ENCODE measurements at regions of chr7 and their contacts with region 1.

Region 1: DNA sequence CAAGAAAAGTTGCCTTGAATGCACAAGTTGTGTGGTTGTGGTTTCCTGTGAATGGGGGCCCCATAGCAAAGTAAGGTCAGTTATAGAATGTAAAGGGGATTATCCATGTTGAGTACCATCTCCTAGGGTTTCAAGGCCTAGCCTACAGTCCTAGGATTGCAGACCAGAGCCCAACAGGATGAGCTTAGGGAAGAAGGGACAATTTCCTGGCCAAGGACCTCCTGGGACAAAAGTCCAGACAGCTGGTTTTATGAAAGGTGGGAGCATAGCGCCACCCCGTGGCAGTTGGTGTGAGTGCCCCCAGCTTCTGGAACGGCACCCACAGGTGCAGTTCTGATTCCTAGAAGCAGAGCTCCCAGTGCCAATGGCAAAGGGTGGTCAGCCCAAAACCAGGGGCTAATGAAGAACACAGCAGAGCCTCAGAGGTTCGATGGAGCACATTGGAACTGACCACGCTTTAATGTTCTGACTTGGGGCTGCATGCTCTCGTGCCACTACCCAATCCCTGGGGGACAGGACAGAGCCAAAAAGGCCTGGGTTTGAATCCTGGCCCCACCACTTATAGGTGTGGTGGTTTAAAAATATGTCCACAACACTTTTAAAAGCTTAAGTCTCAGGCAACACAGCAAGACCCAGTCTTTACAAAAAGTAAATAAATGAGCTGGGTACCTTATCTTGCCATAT is 25.8 kb upstream of the TMEM120A start:
- DNase-seq: peak; percentile 34
- ATAC-seq: peak; percentile 94
- H3K4me3 ChIP-seq: no peak overlapping the region
- H3K27ac ChIP-seq: peak overlapping the region; percentile 41
- H3K4me1 ChIP-seq: peaks cover 10% of the 10 kb centered on the region; the same call in 1 of the 2 replicates
- H3K27me3 ChIP-seq: no peaks in the 10 kb centered on the region
- CTCF ChIP-seq: peak; percentile 89 to 94 (median 92)
- EP300 ChIP-seq: no peak
- POLR2A ChIP-seq: no peak
- RAD21 ChIP-seq: peak; percentile 91

Region 2: DNA sequence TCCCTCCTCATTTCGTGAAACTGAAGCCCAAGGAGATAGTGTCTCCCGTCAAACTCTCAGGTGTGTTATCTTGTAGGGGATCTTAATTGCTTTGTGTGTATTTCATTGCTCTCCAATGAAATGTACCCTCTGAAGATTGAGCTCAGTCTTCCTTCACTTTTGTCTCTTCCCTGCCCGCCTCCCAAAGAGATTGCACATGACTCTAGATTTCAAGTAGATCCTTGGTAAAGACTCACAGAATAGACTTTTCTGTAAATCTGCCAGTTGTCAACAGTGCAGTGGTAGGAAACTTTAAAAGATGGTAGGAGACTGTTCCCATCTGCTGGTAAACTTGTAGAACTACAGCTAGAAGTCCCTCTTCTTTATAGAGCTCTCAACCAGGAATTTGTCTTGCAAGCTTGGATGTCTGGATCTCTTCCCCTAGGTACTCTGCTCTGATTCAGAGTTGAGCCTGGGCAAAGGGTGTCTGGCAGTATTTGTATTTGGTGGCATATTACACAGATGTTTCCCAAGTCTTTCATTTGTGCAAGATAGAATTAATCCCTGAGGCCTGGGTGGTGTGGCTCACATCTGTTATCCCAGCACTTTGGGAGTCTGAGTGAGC is 257.8 kb before region 1 on chr7:
- CTCF ChIA-PET with region 1: interaction called, 24 read pairs
- POLR2A ChIA-PET with region 1: no interaction called
- RAD21 ChIA-PET with region 1: interaction called, 17 read pairs
- SMC1A ChIA-PET with region 1: interaction called, 14 read pairs
- in situ Hi-C with region 1: no loop called
- intact Hi-C with region 1: no loop called
- DNase-seq: peak; percentile 40
- ATAC-seq: peak; percentile 92
- H3K4me3 ChIP-seq: no peak overlapping the region
- H3K27ac ChIP-seq: no peak overlapping the region
- H3K4me1 ChIP-seq: no peaks in the 10 kb centered on the region
- H3K27me3 ChIP-seq: no peaks in the 10 kb centered on the region
- CTCF ChIP-seq: peak; percentile 72 to 80 (median 73)
- EP300 ChIP-seq: no peak
- POLR2A ChIP-seq: no peak
- RAD21 ChIP-seq: peak; percentile 94

Region 3: DNA sequence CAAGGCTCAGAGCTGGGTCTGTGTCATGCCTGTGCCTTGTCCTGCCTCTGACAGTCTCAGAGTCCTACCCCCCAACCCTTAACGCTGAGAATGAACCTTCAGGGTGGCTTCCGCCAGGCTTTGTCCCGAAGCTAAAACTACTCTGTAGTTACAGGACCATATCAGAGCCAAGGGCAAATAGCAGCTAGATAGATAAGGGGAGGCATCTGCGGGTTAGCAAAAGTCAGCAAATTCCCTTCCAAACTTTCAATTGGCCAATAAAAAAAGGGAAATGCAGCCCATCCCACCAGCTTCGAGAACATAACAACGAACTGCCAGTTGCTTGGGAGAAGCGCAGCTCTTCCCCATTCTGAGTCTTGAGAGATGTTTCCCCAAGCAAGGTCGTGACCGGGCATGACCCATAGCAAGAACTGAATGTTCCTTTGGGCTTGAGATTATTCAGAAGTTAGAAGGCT is 224.3 kb before region 1 on chr7:
- CTCF ChIA-PET with region 1: no interaction called
- POLR2A ChIA-PET with region 1: no interaction called
- RAD21 ChIA-PET with region 1: no interaction called
- SMC1A ChIA-PET with region 1: no interaction called
- in situ Hi-C with region 1: no loop called
- intact Hi-C with region 1: no loop called
- DNase-seq: no peak
- ATAC-seq: no peak
- H3K4me3 ChIP-seq: no peak overlapping the region
- H3K27ac ChIP-seq: no peak overlapping the region
- H3K4me1 ChIP-seq: no peaks in the 10 kb centered on the region
- H3K27me3 ChIP-seq: no peaks in the 10 kb centered on the region
- CTCF ChIP-seq: no peak
- EP300 ChIP-seq: no peak
- POLR2A ChIP-seq: no peak
- RAD21 ChIP-seq: no peak

Region 4: GRCh38 chr7:75866489-75867389 is 153.4 kb before region 1 on chr7:
- CTCF ChIA-PET with region 1: interaction called, 247 read pairs
- POLR2A ChIA-PET with region 1: interaction called, 9 read pairs
- RAD21 ChIA-PET with region 1: interaction called, 115 read pairs
- SMC1A ChIA-PET with region 1: interaction called, 75 read pairs
- in situ Hi-C with region 1: loop called (anchors 5 kb)
- intact Hi-C with region 1: loop called (anchors 1 kb)
- DNase-seq: no peak
- ATAC-seq: peak; percentile 98
- H3K4me3 ChIP-seq: no peak overlapping the region
- H3K27ac ChIP-seq: no peak overlapping the region
- H3K4me1 ChIP-seq: no peaks in the 10 kb centered on the region
- H3K27me3 ChIP-seq: no peaks in the 10 kb centered on the region
- CTCF ChIP-seq: peak; percentile 97 to 98 (median 97)
- EP300 ChIP-seq: no peak
- POLR2A ChIP-seq: no peak
- RAD21 ChIP-seq: peak; percentile 97

Region 5: GRCh38 chr7:75878769-75879611 is 141.2 kb before region 1 on chr7 and contains the start of gene RHBDD2:
- CTCF ChIA-PET with region 1: interaction called, 11 read pairs
- POLR2A ChIA-PET with region 1: no interaction called
- RAD21 ChIA-PET with region 1: interaction called, 13 read pairs
- SMC1A ChIA-PET with region 1: interaction called, 5 read pairs
- in situ Hi-C with region 1: no loop called
- intact Hi-C with region 1: no loop called
- DNase-seq: peak; percentile 59
- ATAC-seq: peak; percentile 99
- H3K4me3 ChIP-seq: peak within 1 kb of the TSS; percentile 95
- H3K27ac ChIP-seq: peak within 1 kb of the TSS; percentile 76
- H3K4me1 ChIP-seq: peaks cover 8% of the 10 kb centered on the region
- H3K27me3 ChIP-seq: no peaks in the 10 kb centered on the region
- CTCF ChIP-seq: peak in 1 of 3 experiments; percentile 12; a peak in 1 of 6 replicates
- EP300 ChIP-seq: no peak
- POLR2A ChIP-seq: peak; percentile 98
- RAD21 ChIP-seq: no peak
- polyA plus RNA-seq, gene RHBDD2: 3.9 to 7.4 TPM

Region 6: DNA sequence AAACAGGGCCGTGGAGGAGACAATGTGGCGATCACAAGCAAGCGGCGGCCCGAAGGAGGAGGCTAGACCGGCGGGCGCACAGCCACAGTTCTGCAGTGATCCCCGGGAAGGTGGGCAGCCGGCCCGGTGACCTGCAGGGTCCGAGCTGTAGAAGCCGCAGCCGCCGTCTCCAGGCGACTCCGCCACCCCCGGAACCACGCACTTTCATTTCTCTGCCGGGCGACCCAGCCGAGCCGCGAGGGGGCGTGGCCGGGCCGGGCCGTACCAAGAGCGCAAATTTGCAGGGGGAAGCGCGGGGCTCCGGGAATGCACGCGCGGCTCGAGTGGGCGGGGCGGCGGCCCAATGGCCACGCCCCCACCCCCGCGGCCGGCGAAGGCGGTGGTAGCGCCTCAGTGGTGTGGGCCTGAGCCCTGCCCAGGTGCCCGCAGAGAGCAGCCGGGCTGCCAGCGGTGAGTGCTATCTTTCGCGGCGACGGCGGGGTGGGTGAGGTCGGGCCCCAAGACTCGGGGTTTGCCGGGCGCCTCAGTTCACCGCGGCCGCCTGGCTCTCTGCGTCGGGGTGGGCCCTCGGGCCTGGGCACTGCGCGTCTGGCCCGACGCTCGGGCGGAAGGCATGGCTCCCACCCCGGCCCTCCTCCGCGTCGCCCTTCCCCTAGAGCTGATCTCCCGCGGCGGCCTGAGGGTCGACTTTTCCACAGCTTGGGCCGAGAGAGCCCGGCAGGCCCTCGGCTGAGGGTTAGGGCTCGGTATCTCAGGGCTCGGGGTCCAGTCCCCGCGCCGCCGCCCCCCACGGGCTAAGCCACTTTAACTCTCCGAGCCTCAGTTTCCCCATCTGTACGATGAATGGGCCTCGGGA is 105.2 kb before region 1 on chr7 and contains the start of gene POR:
- CTCF ChIA-PET with region 1: interaction called, 18 read pairs
- POLR2A ChIA-PET with region 1: interaction called, 5 read pairs
- RAD21 ChIA-PET with region 1: interaction called, 13 read pairs
- SMC1A ChIA-PET with region 1: interaction called, 5 read pairs
- in situ Hi-C with region 1: no loop called
- intact Hi-C with region 1: loop called (anchors 5 kb)
- DNase-seq: peak; percentile 69
- ATAC-seq: peak; percentile 96
- H3K4me3 ChIP-seq: peak within 1 kb of the TSS; percentile 92
- H3K27ac ChIP-seq: peak within 1 kb of the TSS; percentile 65
- H3K4me1 ChIP-seq: peaks cover 4% of the 10 kb centered on the region; the same call in 1 of the 2 replicates
- H3K27me3 ChIP-seq: no peaks in the 10 kb centered on the region
- CTCF ChIP-seq: no peak
- EP300 ChIP-seq: no peak
- POLR2A ChIP-seq: peak; percentile 100
- RAD21 ChIP-seq: 0 out of 2 replicates have a peak, but pooled peaks have one; percentile 3
- polyA plus RNA-seq, gene POR: 2.2 to 8.2 TPM

Region 7: DNA sequence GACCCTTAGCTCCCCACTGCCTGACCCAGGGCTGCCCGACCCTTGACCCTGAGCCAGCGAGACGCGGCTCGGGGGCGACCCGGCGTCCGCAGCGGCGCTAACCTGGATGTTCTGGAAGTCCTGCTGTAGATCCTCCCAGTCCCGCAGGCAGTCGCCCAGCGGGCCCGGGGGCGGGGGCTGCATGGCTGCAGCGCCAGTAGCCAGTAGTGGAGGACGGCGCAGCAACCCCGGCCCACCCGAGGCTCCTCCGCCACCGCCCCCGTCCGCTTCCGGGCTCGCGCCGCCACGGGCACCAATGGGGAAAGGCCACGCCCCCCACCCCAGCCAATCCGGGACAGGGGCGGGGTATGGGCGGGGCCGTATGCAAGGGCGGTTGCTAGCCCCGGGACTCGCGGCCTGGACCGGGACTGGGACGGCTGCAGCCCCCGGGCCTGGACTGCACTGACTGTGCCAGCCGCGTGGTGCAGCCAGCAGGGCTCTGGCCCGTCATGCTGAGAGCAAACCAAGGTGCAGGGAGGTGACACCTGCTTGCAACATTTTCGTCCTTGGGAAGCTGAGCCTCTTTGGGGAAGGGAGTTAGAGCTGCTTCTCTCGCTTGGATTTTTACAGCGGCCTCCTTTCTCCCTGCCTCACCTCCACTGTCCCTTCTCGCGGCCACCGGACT is 25.7 kb before region 1 on chr7 and contains the start of gene TMEM120A:
- CTCF ChIA-PET with region 1: interaction called, 15 read pairs
- POLR2A ChIA-PET with region 1: interaction called, 4 read pairs
- RAD21 ChIA-PET with region 1: interaction called, 14 read pairs
- SMC1A ChIA-PET with region 1: interaction called, 3 read pairs
- in situ Hi-C with region 1: no loop called
- intact Hi-C with region 1: no loop called
- DNase-seq: peak; percentile 49
- ATAC-seq: peak; percentile 99
- H3K4me3 ChIP-seq: peak within 1 kb of the TSS; percentile 77
- H3K27ac ChIP-seq: peak within 1 kb of the TSS; percentile 39; the same call in 1 of the 2 replicates
- H3K4me1 ChIP-seq: peaks cover 3% of the 10 kb centered on the region
- H3K27me3 ChIP-seq: no peaks in the 10 kb centered on the region
- CTCF ChIP-seq: 0 out of 6 replicates have a peak, but pooled peaks of 1 of the 3 experiments have one; percentile 3
- EP300 ChIP-seq: no peak
- POLR2A ChIP-seq: peak; percentile 73
- RAD21 ChIP-seq: no peak
- polyA plus RNA-seq, gene TMEM120A: 0.43 to 3.7 TPM

Region 8: GRCh38 chr7:76047811-76048667 is 27.9 kb after region 1 on chr7 and contains the starts of genes MDH2 and STYXL1:
- CTCF ChIA-PET with region 1: interaction called, 10 read pairs
- POLR2A ChIA-PET with region 1: interaction called, 3 read pairs
- RAD21 ChIA-PET with region 1: interaction called, 11 read pairs
- SMC1A ChIA-PET with region 1: interaction called, 3 read pairs
- in situ Hi-C with region 1: no loop called
- intact Hi-C with region 1: no loop called
- DNase-seq: peak; percentile 82
- ATAC-seq: peak; percentile 97
- H3K4me3 ChIP-seq: peak within 1 kb of the TSS; percentile 96
- H3K27ac ChIP-seq: peak within 1 kb of the TSS; percentile 81
- H3K4me1 ChIP-seq: peaks cover 7% of the 10 kb centered on the region
- H3K27me3 ChIP-seq: no peaks in the 10 kb centered on the region
- CTCF ChIP-seq: no peak
- EP300 ChIP-seq: no peak
- POLR2A ChIP-seq: peak; percentile 98
- RAD21 ChIP-seq: no peak
- polyA plus RNA-seq, gene MDH2: 106 to 131 TPM
- polyA plus RNA-seq, gene STYXL1: 18.4 to 33.3 TPM

Region 9: GRCh38 chr7:76106893-76107292 is 86.7 kb after region 1 on chr7:
- CTCF ChIA-PET with region 1: no interaction called
- POLR2A ChIA-PET with region 1: no interaction called
- RAD21 ChIA-PET with region 1: no interaction called
- SMC1A ChIA-PET with region 1: no interaction called
- in situ Hi-C with region 1: no loop called
- intact Hi-C with region 1: no loop called
- DNase-seq: no peak
- ATAC-seq: no peak
- H3K4me3 ChIP-seq: no peak overlapping the region
- H3K27ac ChIP-seq: no peak overlapping the region
- H3K4me1 ChIP-seq: no peaks in the 10 kb centered on the region
- H3K27me3 ChIP-seq: no peaks in the 10 kb centered on the region
- CTCF ChIP-seq: no peak
- EP300 ChIP-seq: no peak
- POLR2A ChIP-seq: no peak
- RAD21 ChIP-seq: no peak

Measured in GM12878 (cell line).